Aorta (tissue), 5 donors: ENCODE measurements at regions of chr20 and their contacts with region 1.

Region 1: DNA sequence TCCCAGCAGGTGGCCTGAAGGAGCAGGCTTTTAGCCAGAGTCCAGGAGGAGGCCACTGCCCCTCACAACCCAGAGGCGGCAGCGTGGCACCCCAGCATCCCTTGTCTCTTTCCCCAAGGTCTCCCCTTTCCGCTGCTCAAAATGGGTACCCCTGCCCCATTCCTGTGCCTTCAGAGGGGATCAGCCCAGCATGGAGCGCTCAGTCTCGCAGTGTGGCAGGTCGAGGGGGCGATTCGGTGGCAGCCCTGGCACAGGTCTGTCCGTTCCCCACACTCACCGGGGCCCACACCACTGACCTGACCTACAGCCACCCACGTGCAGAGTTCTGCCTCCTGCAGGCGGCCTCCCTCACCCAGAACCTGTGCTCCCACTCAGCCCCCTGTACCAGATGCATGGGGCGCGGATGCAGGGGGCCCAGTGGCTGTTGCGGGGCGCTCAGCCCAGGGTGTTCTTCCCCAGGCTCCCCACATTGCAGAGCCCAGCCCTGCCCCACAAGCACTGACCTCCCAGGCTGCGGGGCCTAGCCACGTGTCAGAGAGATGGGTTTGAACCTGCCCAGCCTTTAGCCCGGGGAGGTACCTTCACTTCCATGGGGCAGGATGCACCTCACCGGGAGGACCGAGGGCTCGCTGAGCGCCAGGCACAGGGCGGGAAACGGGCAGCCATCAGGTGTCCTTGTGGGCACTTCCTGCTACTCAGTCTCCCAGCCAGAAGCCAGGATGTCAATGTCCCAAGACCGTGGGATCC is 41.8 kb downstream of the DSTN start:
- DNase-seq: peak; percentile 58 to 78
- ATAC-seq: peak; percentile 13
- H3K4me3 ChIP-seq: no peak overlapping the region
- H3K27ac ChIP-seq: peak overlapping the region; percentile 0 to 14
- H3K4me1 ChIP-seq: no peaks in the 10 kb centered on the region
- H3K27me3 ChIP-seq: no peaks in the 10 kb centered on the region

Region 2: DNA sequence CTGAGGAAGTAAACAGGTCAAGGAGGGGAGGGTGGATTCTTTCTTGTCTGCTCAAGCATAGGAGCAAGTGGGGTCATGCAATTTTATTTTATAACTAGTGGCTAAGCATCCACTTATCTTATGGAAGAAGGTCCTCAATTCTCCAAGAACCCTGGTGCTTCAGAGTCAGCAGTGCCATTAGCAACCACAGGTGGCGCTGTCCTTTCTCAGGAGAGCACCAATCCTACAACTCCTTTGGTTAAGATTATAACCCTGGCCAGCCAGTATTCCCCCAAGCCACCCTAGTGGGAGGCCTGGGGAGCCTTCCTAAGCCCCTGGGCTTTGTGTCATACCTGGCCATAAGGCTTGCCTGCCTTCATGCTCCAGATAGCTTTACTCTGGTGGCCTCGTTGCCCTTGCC is 324.2 kb before region 1 on chr20:
- intact Hi-C with region 1: no loop called
- DNase-seq: no peak
- ATAC-seq: no peak
- H3K4me3 ChIP-seq: no peak overlapping the region
- H3K27ac ChIP-seq: no peak overlapping the region
- H3K4me1 ChIP-seq: no peaks in the 10 kb centered on the region
- H3K27me3 ChIP-seq: no peaks in the 10 kb centered on the region

Region 3: DNA sequence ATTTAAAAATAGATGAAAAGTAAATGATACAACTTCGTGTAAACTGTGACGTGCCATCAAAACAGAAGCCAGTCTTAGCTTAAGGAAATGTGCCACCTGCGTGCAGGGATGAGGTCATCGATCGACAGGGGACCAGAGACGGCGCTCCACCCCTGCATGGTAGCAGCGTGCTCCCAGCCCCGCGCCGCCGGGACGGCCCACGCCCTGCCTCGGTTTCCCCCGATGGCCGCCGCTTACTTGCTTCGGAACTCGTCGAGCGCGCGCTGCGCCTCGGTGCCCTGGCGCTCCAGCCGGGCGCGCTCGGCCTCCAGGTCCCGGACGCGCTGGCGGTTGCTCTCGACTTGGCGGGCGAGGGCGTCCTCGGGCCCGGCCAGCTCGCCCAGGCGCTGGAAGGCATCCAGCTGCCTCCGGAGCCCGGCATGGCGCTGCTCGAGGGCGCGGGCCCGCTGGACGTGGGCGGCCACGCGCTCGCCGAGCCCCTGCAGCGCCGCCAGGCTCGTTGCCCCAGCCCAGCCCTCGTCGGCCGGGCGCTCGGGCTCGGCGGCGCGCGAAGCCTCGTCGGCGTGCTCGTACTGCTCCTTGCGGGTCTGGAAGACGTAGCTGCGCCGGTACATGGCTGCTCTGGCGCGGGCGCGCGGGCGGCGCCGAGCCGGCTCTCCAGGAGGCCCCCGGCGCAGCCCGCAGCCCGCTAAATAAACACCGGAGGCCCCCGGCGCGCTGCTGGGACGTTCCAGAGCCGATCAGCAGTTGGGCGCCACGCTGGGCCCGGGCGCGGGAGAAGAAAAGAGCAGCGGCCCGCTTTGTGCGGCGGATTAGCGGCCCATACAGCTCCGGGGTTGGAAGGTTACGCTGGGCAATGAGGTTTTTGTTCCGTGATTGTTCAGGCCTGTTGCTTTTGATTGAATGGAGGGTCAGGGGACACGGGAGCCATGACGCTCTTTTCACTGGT is 80.7 kb before region 1 on chr20 and contains the start of gene BFSP1:
- intact Hi-C with region 1: loop called (anchors 2 kb)
- DNase-seq: peak; percentile 70 to 86
- ATAC-seq: peak; percentile 81
- H3K4me3 ChIP-seq: peak within 1 kb of the TSS; percentile 31 to 58
- H3K27ac ChIP-seq: no peak within 1 kb of the TSS
- H3K4me1 ChIP-seq: no peaks in the 10 kb centered on the region
- H3K27me3 ChIP-seq: no peaks in the 10 kb centered on the region
- total RNA-seq, gene BFSP1: 1.5 to 2.6 TPM

Region 4: GRCh38 chr20:17562804-17563305 is 48.9 kb before region 1 on chr20:
- intact Hi-C with region 1: no loop called
- DNase-seq: no peak
- ATAC-seq: no peak
- H3K4me3 ChIP-seq: no peak overlapping the region
- H3K27ac ChIP-seq: peak overlapping the region; percentile 62 to 96
- H3K4me1 ChIP-seq: peaks cover 0 to 15% of the 10 kb centered on the region in 2 donors
- H3K27me3 ChIP-seq: no peaks in the 10 kb centered on the region

Region 5: DNA sequence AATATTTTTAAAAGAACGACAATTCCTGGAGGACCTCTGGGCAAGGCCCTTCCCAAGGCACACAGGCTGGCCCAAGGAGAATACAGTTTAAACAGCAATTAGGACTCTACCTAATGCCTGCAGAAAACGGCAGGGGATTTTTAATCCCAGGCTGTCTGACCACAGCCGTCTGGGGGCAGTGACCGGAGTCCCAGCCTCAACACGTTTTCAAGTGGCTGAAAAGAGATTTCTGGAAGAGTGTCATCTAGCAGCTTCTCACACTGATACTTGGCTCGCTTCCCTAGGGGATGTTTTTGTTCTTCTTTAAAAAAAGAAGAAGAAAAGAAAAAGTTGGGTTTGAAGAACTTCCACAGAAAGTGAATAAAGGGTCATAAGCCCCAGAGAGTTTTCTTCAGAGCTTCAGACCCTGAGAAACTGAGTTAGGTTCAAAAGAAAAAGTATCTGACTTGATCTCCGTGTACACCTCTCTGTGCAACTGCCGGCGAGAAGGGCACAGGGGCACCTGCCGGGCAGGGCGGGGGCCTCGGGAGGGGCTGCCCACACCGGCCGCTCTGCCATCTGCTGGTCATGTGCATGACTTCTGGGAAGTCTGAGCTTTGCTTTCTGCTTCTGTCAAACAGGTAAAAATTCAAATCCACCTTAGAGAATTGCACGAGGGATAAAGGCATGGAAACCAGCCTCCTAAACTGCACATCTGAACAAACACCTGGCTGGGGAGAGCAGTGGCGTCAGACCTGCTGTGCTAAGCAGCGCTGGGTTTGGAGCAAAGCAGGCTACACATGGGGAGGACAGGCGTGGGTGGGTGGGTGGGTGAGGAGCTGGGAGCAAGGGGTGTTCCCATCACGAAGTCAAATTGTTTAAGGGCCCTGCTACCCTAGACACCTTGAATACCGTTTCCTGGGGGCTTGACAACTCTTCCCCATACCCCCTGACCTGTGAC is 37.3 kb after region 1 on chr20:
- intact Hi-C with region 1: no loop called
- DNase-seq: peak in 1 of 2 donors; percentile 72
- ATAC-seq: no peak
- H3K4me3 ChIP-seq: no peak overlapping the region
- H3K27ac ChIP-seq: no peak overlapping the region
- H3K4me1 ChIP-seq: no peaks in the 10 kb centered on the region
- H3K27me3 ChIP-seq: no peaks in the 10 kb centered on the region